ENCODE measurements at regions of chr14 and their contacts with region 1.

Region 1: GRCh38 chr14:23555882-23556699 is at the start of gene THTPA:
- DNase-seq: peak; percentile 86 to 96 (median 91)
- ATAC-seq: peak; percentile 91
- H3K4me3 ChIP-seq: peak within 1 kb of the TSS; percentile 94
- H3K4me3 Mint-ChIP-seq: peak within 1 kb of the TSS; percentile 99
- H3K27ac ChIP-seq: peak within 1 kb of the TSS; percentile 87 to 89
- H3K27ac Mint-ChIP-seq: peak within 1 kb of the TSS; percentile 79
- H3K4me1 ChIP-seq: peaks cover 40% of the 10 kb centered on the region
- H3K4me1 Mint-ChIP-seq: peaks cover 42% of the 10 kb centered on the region
- H3K27me3 ChIP-seq: peaks cover 0 to 1% of the 10 kb centered on the region in 2 experiments
- H3K27me3 Mint-ChIP-seq: peaks cover 9% of the 10 kb centered on the region
- CTCF ChIP-seq: no peak
- total RNA-seq, gene THTPA: 13.0 to 13.4 TPM

Region 2: DNA sequence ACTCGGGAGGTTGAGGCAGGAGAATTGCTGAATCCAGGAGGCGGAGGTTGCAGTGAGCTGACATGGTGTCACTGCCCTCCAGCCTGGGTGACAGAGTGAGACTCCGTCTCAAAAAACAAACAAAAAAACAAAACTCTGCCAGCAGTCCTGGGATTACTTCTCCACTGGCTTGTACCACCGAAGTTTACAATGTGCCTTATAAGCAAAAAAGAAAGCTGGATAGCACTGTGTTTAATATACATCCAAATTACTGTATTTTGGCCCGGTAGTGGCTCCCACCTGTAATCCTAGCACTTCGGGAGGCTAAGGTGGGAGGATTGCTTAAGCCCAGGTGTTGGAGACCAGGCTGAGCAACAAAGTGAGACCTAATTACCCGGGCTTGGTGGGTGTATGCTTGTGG is 286.9 kb before region 1 on chr14:
- CTCF ChIA-PET with region 1: no interaction called
- POLR2A ChIA-PET with region 1: no interaction called
- intact Hi-C with region 1: loop called (anchors 5 kb)
- DNase-seq: no peak
- ATAC-seq: no peak
- H3K4me3 ChIP-seq: no peak overlapping the region
- H3K4me3 Mint-ChIP-seq: no peak overlapping the region
- H3K27ac ChIP-seq: no peak overlapping the region
- H3K27ac Mint-ChIP-seq: no peak overlapping the region
- H3K4me1 ChIP-seq: no peaks in the 10 kb centered on the region
- H3K4me1 Mint-ChIP-seq: no peaks in the 10 kb centered on the region
- H3K27me3 ChIP-seq: peaks cover 0 to 4% of the 10 kb centered on the region in 2 experiments
- H3K27me3 Mint-ChIP-seq: peaks cover 17% of the 10 kb centered on the region
- CTCF ChIP-seq: no peak

Region 3: GRCh38 chr14:23478111-23478759 is 77.9 kb before region 1 on chr14:
- CTCF ChIA-PET with region 1: interaction called, 67 read pairs
- POLR2A ChIA-PET with region 1: interaction called, 24 read pairs
- intact Hi-C with region 1: no loop called
- DNase-seq: peak; percentile 40 to 82 (median 61)
- ATAC-seq: peak; percentile 90
- H3K4me3 ChIP-seq: no peak overlapping the region
- H3K4me3 Mint-ChIP-seq: no peak overlapping the region
- H3K27ac ChIP-seq: no peak overlapping the region
- H3K27ac Mint-ChIP-seq: peak overlapping the region; percentile 1
- H3K4me1 ChIP-seq: no peaks in the 10 kb centered on the region
- H3K4me1 Mint-ChIP-seq: peaks cover 16% of the 10 kb centered on the region
- H3K27me3 ChIP-seq: no peaks in the 10 kb centered on the region
- H3K27me3 Mint-ChIP-seq: no peaks in the 10 kb centered on the region
- CTCF ChIP-seq: peak; percentile 70

Region 4: GRCh38 chr14:23483236-23483854 is 72.7 kb before region 1 on chr14:
- CTCF ChIA-PET with region 1: interaction called, 67 read pairs
- POLR2A ChIA-PET with region 1: interaction called, 24 read pairs
- intact Hi-C with region 1: no loop called
- DNase-seq: no peak
- ATAC-seq: no peak
- H3K4me3 ChIP-seq: no peak overlapping the region
- H3K4me3 Mint-ChIP-seq: no peak overlapping the region
- H3K27ac ChIP-seq: no peak overlapping the region
- H3K27ac Mint-ChIP-seq: no peak overlapping the region
- H3K4me1 ChIP-seq: no peaks in the 10 kb centered on the region
- H3K4me1 Mint-ChIP-seq: peaks cover 2% of the 10 kb centered on the region
- H3K27me3 ChIP-seq: no peaks in the 10 kb centered on the region
- H3K27me3 Mint-ChIP-seq: no peaks in the 10 kb centered on the region
- CTCF ChIP-seq: no peak

Region 5: GRCh38 chr14:23539248-23540140 is 16.6 kb before region 1 on chr14:
- CTCF ChIA-PET with region 1: interaction called, 8 read pairs
- POLR2A ChIA-PET with region 1: no interaction called
- intact Hi-C with region 1: loop called in 1 of 2 experiments (anchors 2 kb)
- DNase-seq: peak in 5 of 14 experiments; percentile 10 to 69 (median 55)
- ATAC-seq: peak; percentile 78
- H3K4me3 ChIP-seq: no peak overlapping the region
- H3K4me3 Mint-ChIP-seq: no peak overlapping the region
- H3K27ac ChIP-seq: no peak overlapping the region
- H3K27ac Mint-ChIP-seq: no peak overlapping the region
- H3K4me1 ChIP-seq: peaks cover 4% of the 10 kb centered on the region
- H3K4me1 Mint-ChIP-seq: no peaks in the 10 kb centered on the region
- H3K27me3 ChIP-seq: no peaks in the 10 kb centered on the region
- H3K27me3 Mint-ChIP-seq: peaks cover 5% of the 10 kb centered on the region
- CTCF ChIP-seq: peak; percentile 78

Region 6: DNA sequence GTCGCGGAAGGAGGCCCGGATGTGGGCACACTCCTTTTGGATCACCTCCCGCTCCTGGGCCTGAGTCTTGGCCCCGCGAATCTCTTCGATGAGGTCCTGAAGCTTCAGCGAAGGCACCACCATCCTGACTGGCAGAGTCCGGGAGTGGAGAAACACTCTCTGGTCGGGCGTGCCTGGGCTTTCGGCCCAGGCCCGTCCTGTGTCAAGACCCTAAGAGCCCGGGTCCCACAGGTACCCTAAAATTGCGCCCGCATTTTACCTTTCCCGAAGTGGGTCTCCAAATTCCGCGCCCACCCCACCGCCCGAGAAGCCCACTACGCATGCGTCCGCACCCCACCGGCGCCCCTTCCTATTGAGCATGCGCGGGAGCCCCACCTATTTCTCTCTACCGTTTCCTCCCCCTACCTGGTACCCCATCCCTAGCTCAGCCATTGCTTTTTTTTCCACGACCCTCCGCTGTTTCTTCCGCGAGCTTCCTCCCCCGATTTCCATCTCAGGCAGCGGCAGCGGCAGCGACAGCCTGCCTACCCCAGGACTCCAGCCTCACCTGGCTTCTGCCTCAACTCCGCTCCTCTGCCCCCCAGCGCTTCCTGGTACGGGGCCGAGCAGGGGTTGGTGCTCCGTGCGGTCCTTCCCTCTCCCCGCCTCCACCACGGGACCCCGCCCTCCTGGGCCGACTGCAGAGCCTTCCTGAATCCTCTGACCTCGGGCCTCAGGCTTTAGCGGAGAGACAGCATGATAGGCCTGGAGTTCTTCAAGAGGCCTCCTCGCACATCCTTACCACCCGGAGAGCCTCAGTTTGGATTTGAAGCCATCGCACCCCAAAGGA is 11.3 kb after region 1 on chr14 and contains the start of gene AP1G2:
- CTCF ChIA-PET with region 1: interaction called, 6 read pairs
- POLR2A ChIA-PET with region 1: interaction called, 5 read pairs
- intact Hi-C with region 1: loop called in 1 of 2 experiments (anchors 1 kb)
- DNase-seq: peak; percentile 69 to 94 (median 83)
- ATAC-seq: peak; percentile 91
- H3K4me3 ChIP-seq: peak within 1 kb of the TSS; percentile 75
- H3K4me3 Mint-ChIP-seq: peak within 1 kb of the TSS; percentile 99
- H3K27ac ChIP-seq: peak within 1 kb of the TSS; percentile 75 to 79
- H3K27ac Mint-ChIP-seq: peak within 1 kb of the TSS; percentile 96
- H3K4me1 ChIP-seq: peaks cover 40% of the 10 kb centered on the region
- H3K4me1 Mint-ChIP-seq: peaks cover 52% of the 10 kb centered on the region
- H3K27me3 ChIP-seq: no peaks in the 10 kb centered on the region
- H3K27me3 Mint-ChIP-seq: peaks cover 7% of the 10 kb centered on the region
- CTCF ChIP-seq: no peak
- total RNA-seq, gene AP1G2: 193 to 198 TPM